Posterior vena cava (tissue), 2 donors: ENCODE measurements at regions of chrX and their contacts with region 1.

Region 1: GRCh38 chrX:65647801-65648200 is 19.7 kb upstream of the MSN start:
- DNase-seq: no peak

Region 2: GRCh38 chrX:65677954-65678469 is 30.2 kb after region 1 on chrX:
- intact Hi-C with region 1: no loop called
- DNase-seq: no peak

Region 3: GRCh38 chrX:65688403-65688871 is 40.6 kb after region 1 on chrX:
- intact Hi-C with region 1: loop called in 1 of 2 experiments (anchors 2 kb)
- DNase-seq: no peak

Region 4: DNA sequence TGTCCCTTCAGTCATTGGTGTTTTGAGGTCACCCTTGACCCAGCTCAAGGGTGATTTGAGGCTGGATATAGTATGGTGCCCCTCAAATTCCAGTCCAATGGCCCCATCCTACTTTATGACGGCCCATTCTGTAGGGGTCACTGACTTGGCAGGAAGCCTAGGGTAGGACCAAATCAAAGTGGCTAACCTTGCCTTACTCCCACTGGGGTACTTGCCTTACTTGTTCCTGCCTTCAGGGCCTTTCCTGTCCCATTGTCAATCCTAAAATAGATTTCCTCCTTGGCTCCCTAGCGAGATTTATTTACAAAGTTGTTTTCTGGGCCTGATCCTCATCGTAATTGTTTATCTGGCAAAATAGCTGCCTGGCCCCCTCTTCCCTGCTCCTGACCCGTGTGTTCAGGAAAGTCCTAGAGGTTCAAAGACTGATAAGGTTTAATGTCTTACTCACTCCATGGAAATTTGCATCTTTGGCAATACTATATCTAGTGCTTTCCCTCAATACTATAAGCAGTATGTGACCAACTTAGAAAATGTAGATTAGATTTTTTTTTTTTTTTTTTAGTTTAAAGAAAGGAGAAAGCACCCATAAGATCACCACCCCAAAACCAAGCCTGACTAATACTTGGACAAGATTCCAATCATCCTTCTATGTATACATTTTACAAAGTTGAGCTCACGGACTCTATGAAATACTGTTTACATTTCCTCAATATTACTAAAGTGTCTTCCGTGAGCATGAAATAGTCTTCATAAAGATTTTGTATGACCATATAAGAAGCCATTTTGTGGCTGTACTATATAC is 64.4 kb after region 1 on chrX:
- intact Hi-C with region 1: no loop called
- DNase-seq: no peak